Psoas muscle (tissue), 8 donors: ENCODE measurements at regions of chr6 and their contacts with region 1.

Region 1: GRCh38 chr6:116969211-116969863 is 92.3 kb downstream of the RFX6 start:
- DNase-seq: no peak
- ATAC-seq: peak in 3 of 4 donors; percentile 18 to 71 (median 69)
- H3K4me3 ChIP-seq: no peak overlapping the region
- H3K27ac ChIP-seq: no peak overlapping the region
- H3K4me1 ChIP-seq: peaks cover 16% of the 10 kb centered on the region
- H3K27me3 ChIP-seq: no peaks in the 10 kb centered on the region
- CTCF ChIP-seq: peak; percentile 70

Region 2: GRCh38 chr6:116596815-116597214 is 372.5 kb before region 1 on chr6:
- intact Hi-C with region 1: no loop called
- DNase-seq: no peak
- ATAC-seq: no peak
- H3K4me3 ChIP-seq: no peak overlapping the region
- H3K27ac ChIP-seq: no peak overlapping the region
- H3K4me1 ChIP-seq: no peaks in the 10 kb centered on the region
- H3K27me3 ChIP-seq: no peaks in the 10 kb centered on the region
- CTCF ChIP-seq: no peak

Region 3: GRCh38 chr6:116779573-116780164 is 189.7 kb before region 1 on chr6:
- intact Hi-C with region 1: loop called in 1 of 2 experiments (anchors 2 kb)
- DNase-seq: no peak
- ATAC-seq: no peak
- H3K4me3 ChIP-seq: peak overlapping the region; percentile 39
- H3K27ac ChIP-seq: no peak overlapping the region
- H3K4me1 ChIP-seq: no peaks in the 10 kb centered on the region
- H3K27me3 ChIP-seq: no peaks in the 10 kb centered on the region
- CTCF ChIP-seq: peak; percentile 53

Region 4: GRCh38 chr6:116902629-116903028 is 66.7 kb before region 1 on chr6:
- intact Hi-C with region 1: no loop called
- DNase-seq: no peak
- ATAC-seq: no peak
- H3K4me3 ChIP-seq: no peak overlapping the region
- H3K27ac ChIP-seq: no peak overlapping the region
- H3K4me1 ChIP-seq: no peaks in the 10 kb centered on the region
- H3K27me3 ChIP-seq: peaks cover 0 to 3% (median 0%) of the 10 kb centered on the region in 3 donors
- CTCF ChIP-seq: no peak

Region 5: GRCh38 chr6:117188627-117189201 is 219.4 kb after region 1 on chr6:
- intact Hi-C with region 1: loop called (anchors 2 to 5 kb)
- DNase-seq: no peak
- ATAC-seq: peak in 1 of 4 donors; percentile 67
- H3K4me3 ChIP-seq: no peak overlapping the region
- H3K27ac ChIP-seq: no peak overlapping the region
- H3K4me1 ChIP-seq: no peaks in the 10 kb centered on the region
- H3K27me3 ChIP-seq: no peaks in the 10 kb centered on the region
- CTCF ChIP-seq: peak; percentile 53

Region 6: GRCh38 chr6:117317261-117317660 is 347.9 kb after region 1 on chr6:
- intact Hi-C with region 1: loop called (anchors 2 to 5 kb)
- DNase-seq: no peak
- ATAC-seq: peak in 3 of 4 donors; percentile 75 to 88 (median 79)
- H3K4me3 ChIP-seq: no peak overlapping the region
- H3K27ac ChIP-seq: no peak overlapping the region
- H3K4me1 ChIP-seq: peaks cover 4% of the 10 kb centered on the region
- H3K27me3 ChIP-seq: no peaks in the 10 kb centered on the region
- CTCF ChIP-seq: peak; percentile 65